ENCODE measurements at regions of chr20 and their contacts with region 1.

Region 1: DNA sequence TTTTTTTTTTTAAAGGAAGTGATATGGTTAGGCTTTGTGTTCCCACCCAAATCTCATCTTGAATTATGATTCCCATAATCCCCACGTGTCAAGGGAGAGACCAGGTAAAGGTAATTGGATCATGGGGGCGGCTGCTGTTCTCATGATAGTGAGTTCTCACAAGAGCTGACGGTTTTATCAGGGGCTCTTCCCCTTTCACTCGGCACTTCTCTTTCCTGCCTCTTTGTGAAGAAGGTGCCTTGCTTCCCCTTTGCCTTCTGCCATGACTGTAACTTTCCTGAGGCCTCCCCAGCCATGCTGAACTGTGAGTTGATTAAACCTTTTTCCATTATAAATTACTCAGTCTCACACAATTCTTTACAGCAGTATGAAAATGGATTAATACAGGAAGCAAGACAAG is 64.3 kb downstream of the ZFP64 start:
- DNase-seq: no peak
- ATAC-seq: no peak
- H3K4me3 ChIP-seq: no peak overlapping the region
- H3K27ac ChIP-seq: no peak overlapping the region
- H3K4me1 ChIP-seq: no peaks in the 10 kb centered on the region
- H3K27me3 ChIP-seq: no peaks in the 10 kb centered on the region
- CTCF ChIP-seq: no peak
- EP300 ChIP-seq: no peak
- POLR2A ChIP-seq: no peak
- RAD21 ChIP-seq: no peak

Region 2: DNA sequence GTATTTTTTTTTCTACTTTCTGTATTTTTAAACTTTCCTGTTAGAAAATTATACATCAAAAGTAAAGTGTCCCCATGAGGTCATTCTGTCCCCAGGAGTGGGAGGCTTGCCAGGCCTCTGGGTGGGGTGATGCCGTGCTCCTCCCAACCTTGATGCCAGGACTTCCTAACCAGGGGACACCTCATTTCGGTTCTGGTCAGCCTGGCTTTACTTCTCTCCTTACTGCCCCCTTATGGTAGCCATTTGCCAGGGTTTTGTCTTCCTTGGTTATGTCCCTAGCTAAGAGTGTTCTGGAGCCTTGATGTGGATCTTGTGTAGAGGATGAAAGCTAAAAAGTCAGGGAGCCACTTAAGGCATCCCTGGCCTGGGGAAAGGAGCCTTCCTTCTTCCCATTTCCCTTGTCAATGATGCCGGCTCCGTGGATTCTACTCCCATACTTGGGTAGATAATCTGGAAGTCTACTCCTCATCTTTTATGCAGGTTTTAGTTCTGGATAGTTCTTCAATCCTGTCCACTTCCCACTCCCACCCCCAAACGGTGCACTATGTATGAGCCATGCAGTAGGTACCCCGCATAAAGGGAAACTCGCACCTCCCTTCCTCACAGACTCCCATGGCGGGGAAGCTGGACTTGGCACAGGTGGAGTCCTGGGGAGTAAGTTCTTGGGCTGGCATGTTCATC is 160.9 kb before region 1 on chr20:
- CTCF ChIA-PET with region 1: no interaction called
- POLR2A ChIA-PET with region 1: no interaction called
- in situ Hi-C with region 1: no loop called
- intact Hi-C with region 1: no loop called
- DNase-seq: peak; percentile 84
- ATAC-seq: peak; percentile 96
- H3K4me3 ChIP-seq: no peak overlapping the region
- H3K27ac ChIP-seq: no peak overlapping the region
- H3K4me1 ChIP-seq: peaks cover 20% of the 10 kb centered on the region
- H3K27me3 ChIP-seq: peaks cover 0 to 6% of the 10 kb centered on the region in 2 experiments; a peak in 1 of 5 replicates
- CTCF ChIP-seq: peak; percentile 88
- EP300 ChIP-seq: no peak
- POLR2A ChIP-seq: no peak
- RAD21 ChIP-seq: peak; percentile 65; the same call in 1 of the 2 replicates

Region 3: GRCh38 chr20:52150440-52151258 is 23.3 kb after region 1 on chr20:
- CTCF ChIA-PET with region 1: interaction called, 24 read pairs
- POLR2A ChIA-PET with region 1: no interaction called
- in situ Hi-C with region 1: no loop called
- intact Hi-C with region 1: loop called (anchors 1 kb)
- DNase-seq: peak; percentile 58
- ATAC-seq: peak; percentile 82
- H3K4me3 ChIP-seq: no peak overlapping the region
- H3K27ac ChIP-seq: no peak overlapping the region
- H3K4me1 ChIP-seq: no peaks in the 10 kb centered on the region
- H3K27me3 ChIP-seq: no peaks in the 10 kb centered on the region
- CTCF ChIP-seq: peak; percentile 85
- EP300 ChIP-seq: no peak
- POLR2A ChIP-seq: no peak
- RAD21 ChIP-seq: no peak; the same call in 1 of the 2 replicates

Region 4: DNA sequence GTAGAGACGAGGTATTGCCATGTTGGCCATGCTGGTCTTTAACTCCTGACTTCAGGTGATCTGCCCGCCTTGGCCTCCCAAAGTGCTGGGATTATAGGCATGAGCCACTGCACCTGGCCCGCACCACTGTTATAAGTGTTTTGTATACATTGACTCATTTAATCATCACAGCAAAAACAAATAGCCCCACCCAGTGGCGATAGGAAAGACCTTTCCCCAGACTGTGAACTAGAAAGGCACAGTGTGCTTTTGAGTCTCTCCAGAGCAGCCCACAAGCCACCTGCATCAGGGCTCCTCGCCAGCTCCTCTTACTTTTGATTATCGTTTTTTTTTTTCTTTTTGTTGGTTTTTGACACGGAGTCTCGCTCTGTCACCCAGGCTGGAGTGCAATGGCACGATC is 92.1 kb after region 1 on chr20:
- CTCF ChIA-PET with region 1: no interaction called
- POLR2A ChIA-PET with region 1: no interaction called
- in situ Hi-C with region 1: no loop called
- intact Hi-C with region 1: loop called (anchors 1 kb)
- DNase-seq: peak; percentile 37
- ATAC-seq: peak; percentile 74
- H3K4me3 ChIP-seq: no peak overlapping the region
- H3K27ac ChIP-seq: no peak overlapping the region
- H3K4me1 ChIP-seq: no peaks in the 10 kb centered on the region
- H3K27me3 ChIP-seq: no peaks in the 10 kb centered on the region; a peak in 2 of 5 replicates
- CTCF ChIP-seq: peak; percentile 54
- EP300 ChIP-seq: no peak
- POLR2A ChIP-seq: no peak
- RAD21 ChIP-seq: no peak

Region 5: DNA sequence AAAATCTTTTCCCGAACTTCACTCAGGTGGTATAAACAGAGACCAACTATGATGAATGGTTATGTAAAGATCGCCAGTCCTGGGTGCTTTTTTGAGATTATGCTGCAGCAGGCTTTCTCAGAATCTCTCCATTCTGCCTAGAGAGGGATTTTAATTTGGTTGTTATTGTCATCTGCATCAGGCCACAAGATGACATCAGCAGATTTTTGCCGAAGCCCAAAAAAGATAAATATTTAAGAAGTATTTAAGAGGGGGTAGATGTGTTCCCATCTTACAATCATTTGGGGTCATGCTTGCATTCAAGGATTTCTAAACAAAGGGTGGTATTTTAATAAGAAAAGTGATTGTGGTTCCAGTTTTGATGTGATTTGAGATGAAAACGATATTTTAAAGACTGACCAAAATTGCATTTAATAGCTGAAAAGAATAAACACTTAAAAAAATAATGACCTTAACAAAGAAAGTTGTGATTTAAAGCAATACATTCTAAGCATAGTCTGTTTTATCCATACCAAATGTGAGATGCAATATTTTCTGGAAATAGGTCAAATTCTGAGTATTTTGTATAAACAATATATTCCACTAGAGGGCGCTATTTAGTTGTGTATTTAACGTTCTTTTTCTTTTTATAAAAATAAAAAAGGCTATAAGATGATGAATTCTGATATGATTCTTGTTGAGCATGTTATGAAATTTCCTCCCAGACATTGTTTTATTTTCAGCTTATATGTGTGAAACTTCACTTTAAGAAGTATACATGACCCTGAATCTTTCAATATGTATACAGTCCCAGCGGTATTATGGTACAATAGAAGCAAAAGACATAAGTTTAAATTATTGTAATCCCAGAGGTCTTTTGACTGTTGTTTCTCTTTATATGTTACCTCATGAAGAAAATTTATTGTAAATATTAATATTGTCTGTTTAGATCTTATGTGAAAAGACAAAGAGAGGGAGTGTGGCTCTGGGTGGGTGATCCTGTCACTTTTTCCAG is 115.2 kb after region 1 on chr20:
- CTCF ChIA-PET with region 1: no interaction called
- POLR2A ChIA-PET with region 1: no interaction called
- in situ Hi-C with region 1: no loop called
- intact Hi-C with region 1: loop called (anchors 5 kb)
- DNase-seq: no peak
- ATAC-seq: no peak
- H3K4me3 ChIP-seq: no peak overlapping the region
- H3K27ac ChIP-seq: no peak overlapping the region
- H3K4me1 ChIP-seq: peaks cover 4% of the 10 kb centered on the region; the same call in 1 of the 2 replicates
- H3K27me3 ChIP-seq: no peaks in the 10 kb centered on the region; a peak in 1 of 5 replicates
- CTCF ChIP-seq: peak; percentile 45
- EP300 ChIP-seq: no peak
- POLR2A ChIP-seq: no peak
- RAD21 ChIP-seq: no peak

Region 6: GRCh38 chr20:52312132-52312729 is 184.9 kb after region 1 on chr20:
- CTCF ChIA-PET with region 1: no interaction called
- POLR2A ChIA-PET with region 1: no interaction called
- in situ Hi-C with region 1: no loop called
- intact Hi-C with region 1: loop called (anchors 1 kb)
- DNase-seq: peak; percentile 70
- ATAC-seq: peak; percentile 81
- H3K4me3 ChIP-seq: no peak overlapping the region
- H3K27ac ChIP-seq: no peak overlapping the region
- H3K4me1 ChIP-seq: peaks cover 10% of the 10 kb centered on the region; the same call in 1 of the 2 replicates
- H3K27me3 ChIP-seq: peaks cover 5 to 12% of the 10 kb centered on the region in 2 experiments; a peak in 3 of 5 replicates
- CTCF ChIP-seq: peak; percentile 82
- EP300 ChIP-seq: no peak
- POLR2A ChIP-seq: no peak
- RAD21 ChIP-seq: peak; percentile 53; the same call in 1 of the 2 replicates

Region 7: DNA sequence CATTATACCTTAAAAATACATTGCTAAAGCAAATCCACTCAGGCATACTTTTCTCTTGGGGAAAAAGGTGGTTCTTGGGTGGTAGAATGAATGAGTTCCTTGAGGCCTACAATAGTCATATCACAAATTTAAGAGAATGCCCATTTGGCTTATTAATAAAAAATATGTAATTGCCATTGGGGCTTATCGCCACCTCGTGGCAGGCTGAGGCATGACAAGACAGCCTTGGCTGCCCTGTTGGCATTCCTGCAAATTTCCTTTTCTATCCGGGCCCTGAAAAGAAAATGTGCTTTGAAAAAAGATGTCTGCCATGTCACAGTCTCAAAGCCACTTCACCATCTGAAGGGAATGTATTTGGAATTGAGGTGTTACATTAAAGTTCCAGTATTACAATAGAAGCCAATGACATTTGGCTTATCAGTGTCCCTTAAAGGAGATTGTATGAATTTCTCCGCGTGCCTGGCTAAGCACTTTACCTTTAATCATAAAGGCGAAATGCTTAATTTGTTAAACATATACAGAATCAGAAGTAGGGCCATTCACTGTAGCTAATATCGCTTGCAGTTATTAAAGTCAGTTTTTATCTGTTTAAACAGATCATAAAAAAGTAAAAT is 252.5 kb after region 1 on chr20:
- CTCF ChIA-PET with region 1: interaction called, 10 read pairs
- POLR2A ChIA-PET with region 1: no interaction called
- in situ Hi-C with region 1: loop called (anchors 10 kb)
- intact Hi-C with region 1: no loop called
- DNase-seq: peak; percentile 15
- ATAC-seq: no peak; the same call in 2 of the 3 replicates
- H3K4me3 ChIP-seq: no peak overlapping the region
- H3K27ac ChIP-seq: no peak overlapping the region
- H3K4me1 ChIP-seq: no peaks in the 10 kb centered on the region
- H3K27me3 ChIP-seq: no peaks in the 10 kb centered on the region
- CTCF ChIP-seq: peak; percentile 79
- EP300 ChIP-seq: no peak
- POLR2A ChIP-seq: no peak
- RAD21 ChIP-seq: peak; percentile 50; the same call in 1 of the 2 replicates

Measured in HepG2 (cell line).